Prostate gland (tissue), 2 donors: ENCODE measurements at regions of chr20 and their contacts with region 1.

Region 1: GRCh38 chr20:32521780-32522525 is 63.2 kb downstream of the NOL4L start:
- DNase-seq: peak; percentile 40
- H3K4me3 ChIP-seq: no peak overlapping the region
- H3K27ac ChIP-seq: no peak overlapping the region
- H3K4me1 ChIP-seq: peaks cover 5% of the 10 kb centered on the region
- H3K27me3 ChIP-seq: no peaks in the 10 kb centered on the region
- CTCF ChIP-seq: peak; percentile 71 to 92 (median 84)
- POLR2A ChIP-seq: no peak

Region 2: DNA sequence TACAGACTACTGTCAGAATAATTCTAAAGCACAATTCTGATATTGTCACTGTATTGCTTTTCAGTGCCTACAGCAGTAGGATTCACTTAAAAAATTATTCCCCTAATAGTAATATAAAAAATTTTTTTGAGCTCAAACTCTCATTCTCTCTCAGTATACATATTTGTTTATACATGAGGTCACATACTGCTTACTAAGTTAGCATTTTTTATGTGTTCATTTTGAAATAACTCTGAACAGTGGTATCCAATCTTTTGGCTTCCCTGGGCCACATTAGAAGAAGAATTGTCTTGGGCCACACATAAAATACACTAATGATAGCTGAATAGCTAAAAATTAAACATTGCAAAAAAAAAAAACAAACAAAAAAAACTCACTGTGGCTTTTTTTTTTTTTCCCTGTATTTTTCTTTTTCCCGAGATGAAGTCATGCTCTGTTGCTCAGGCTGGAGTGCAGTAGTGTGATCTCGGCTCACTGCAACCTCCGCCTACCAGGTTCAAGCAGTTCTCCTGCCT is 125.2 kb before region 1 on chr20:
- intact Hi-C with region 1: no loop called
- DNase-seq: no peak
- H3K4me3 ChIP-seq: no peak overlapping the region
- H3K27ac ChIP-seq: no peak overlapping the region
- H3K4me1 ChIP-seq: no peaks in the 10 kb centered on the region
- H3K27me3 ChIP-seq: no peaks in the 10 kb centered on the region
- CTCF ChIP-seq: no peak
- POLR2A ChIP-seq: no peak

Region 3: DNA sequence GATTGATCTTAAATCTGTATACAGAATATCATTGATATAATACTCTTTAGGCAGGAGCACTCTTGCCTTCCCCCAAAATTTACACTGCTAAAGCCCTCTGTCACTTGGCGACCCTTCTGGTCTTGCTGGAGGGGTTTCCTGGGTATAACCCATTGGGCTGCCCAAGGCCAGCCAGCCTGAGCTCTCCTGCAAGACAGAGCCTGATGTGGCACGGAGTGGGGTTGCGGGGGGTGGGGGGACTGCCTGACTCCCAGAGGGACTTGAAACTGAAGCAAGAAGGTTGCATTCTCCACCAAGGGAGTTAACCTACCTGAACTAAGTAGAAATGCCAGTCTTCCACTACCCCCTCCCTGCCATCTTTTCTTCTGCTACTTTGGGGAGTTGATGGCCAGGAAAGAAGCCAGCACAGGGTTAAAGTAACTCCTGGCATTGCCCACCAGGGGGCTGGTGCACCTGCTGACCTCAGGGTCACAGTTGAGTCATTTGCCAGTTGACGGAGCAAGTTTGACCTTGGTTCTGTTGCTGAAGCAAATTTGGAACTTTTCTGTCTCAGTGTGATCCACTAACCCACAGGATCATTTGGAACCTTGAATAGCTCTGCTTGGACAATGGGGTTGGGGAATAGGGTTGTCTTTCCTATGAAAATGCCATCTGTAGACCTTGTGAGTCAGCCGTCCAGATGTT is 84.4 kb before region 1 on chr20:
- intact Hi-C with region 1: no loop called
- DNase-seq: no peak
- H3K4me3 ChIP-seq: no peak overlapping the region
- H3K27ac ChIP-seq: no peak overlapping the region
- H3K4me1 ChIP-seq: no peaks in the 10 kb centered on the region
- H3K27me3 ChIP-seq: no peaks in the 10 kb centered on the region
- CTCF ChIP-seq: no peak
- POLR2A ChIP-seq: no peak

Region 4: DNA sequence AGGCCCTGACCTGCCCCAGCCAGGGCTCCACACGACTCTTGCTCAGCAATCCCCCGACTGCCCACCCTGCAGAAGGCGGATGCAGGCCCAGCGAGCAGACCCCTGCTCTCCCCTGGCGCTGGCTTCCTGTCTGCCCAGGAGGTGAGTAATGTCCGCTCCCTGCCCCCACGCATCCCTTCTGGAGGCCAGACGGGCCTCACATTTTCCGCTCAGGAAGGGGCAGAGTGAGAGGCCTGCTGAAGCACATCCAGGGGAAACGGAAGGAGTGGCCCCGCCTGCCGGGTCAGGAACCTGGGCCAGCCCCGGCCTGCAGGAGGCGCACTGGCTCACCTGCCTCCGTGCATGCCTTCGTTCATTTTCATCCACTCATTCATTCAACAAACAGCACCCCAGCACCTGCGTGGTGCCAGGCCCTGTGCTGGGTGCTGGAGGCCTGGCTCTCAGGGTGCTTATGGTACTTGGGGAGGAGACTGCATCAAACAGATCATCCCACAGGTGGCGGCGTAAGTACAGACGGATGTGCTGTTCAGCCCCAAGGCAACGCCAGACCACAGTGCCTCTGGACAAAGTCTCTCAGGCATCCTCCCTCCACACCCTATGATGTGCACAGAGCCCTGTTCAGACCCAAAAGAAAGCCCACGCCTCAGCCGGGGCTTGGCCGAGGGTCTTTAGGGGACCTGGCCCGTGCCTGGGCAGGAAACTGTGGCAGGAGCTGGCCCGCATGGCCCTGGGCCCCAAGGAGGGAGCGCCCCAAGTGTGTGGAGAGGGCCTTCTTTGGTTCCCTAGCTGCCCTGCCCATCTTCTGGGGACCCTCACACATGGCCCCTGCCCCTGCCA is 51.7 kb before region 1 on chr20:
- intact Hi-C with region 1: no loop called
- DNase-seq: no peak
- H3K4me3 ChIP-seq: no peak overlapping the region
- H3K27ac ChIP-seq: no peak overlapping the region
- H3K4me1 ChIP-seq: peaks cover 17% of the 10 kb centered on the region
- H3K27me3 ChIP-seq: no peaks in the 10 kb centered on the region
- CTCF ChIP-seq: peak in 1 of 4 experiments; percentile 26
- POLR2A ChIP-seq: no peak

Region 5: DNA sequence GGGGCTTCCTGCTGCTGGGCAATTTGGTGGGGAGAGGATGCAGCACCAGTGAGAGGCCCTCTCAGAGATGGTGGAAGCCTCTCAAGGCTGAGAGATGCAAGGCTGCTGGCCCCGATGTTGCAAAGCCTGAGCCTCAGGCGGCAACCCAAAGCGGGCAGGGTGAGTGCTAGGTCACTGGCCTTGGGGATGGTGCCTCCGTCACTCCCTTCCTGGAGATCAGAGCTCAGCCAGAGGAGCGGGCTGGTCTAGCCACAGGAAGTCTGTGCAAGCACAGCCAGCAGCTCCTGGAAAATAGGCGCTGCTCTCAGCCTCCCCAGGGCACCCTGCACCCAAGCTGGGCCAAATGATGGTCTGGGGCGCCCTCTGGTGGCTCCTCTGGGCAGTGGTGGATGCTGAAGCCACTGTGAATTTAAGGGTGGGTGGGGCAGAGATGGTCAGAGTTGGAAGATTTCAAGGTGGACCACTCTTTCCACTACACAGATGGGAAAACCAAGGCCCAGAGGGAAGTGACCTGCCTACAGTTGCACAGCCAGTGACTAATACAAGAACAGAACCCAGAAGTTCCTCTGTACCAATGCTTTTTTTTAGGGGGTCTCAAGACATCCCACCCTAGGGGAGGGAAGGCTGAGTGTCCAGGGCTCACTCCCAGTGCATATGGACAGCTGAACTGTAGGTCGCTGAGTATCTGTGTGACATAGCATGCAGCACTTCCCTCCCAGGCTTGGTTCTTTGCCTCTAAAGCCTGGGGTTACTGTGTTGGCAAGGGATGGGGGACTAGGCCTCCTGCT is 131.0 kb after region 1 on chr20:
- intact Hi-C with region 1: loop called (anchors 2 kb)
- DNase-seq: peak; percentile 70
- H3K4me3 ChIP-seq: no peak overlapping the region
- H3K27ac ChIP-seq: no peak overlapping the region
- H3K4me1 ChIP-seq: no peaks in the 10 kb centered on the region
- H3K27me3 ChIP-seq: no peaks in the 10 kb centered on the region
- CTCF ChIP-seq: peak; percentile 95 to 97 (median 96)
- POLR2A ChIP-seq: no peak